ENCODE measurements at regions of chr4 and their contacts with region 1.

Region 1: DNA sequence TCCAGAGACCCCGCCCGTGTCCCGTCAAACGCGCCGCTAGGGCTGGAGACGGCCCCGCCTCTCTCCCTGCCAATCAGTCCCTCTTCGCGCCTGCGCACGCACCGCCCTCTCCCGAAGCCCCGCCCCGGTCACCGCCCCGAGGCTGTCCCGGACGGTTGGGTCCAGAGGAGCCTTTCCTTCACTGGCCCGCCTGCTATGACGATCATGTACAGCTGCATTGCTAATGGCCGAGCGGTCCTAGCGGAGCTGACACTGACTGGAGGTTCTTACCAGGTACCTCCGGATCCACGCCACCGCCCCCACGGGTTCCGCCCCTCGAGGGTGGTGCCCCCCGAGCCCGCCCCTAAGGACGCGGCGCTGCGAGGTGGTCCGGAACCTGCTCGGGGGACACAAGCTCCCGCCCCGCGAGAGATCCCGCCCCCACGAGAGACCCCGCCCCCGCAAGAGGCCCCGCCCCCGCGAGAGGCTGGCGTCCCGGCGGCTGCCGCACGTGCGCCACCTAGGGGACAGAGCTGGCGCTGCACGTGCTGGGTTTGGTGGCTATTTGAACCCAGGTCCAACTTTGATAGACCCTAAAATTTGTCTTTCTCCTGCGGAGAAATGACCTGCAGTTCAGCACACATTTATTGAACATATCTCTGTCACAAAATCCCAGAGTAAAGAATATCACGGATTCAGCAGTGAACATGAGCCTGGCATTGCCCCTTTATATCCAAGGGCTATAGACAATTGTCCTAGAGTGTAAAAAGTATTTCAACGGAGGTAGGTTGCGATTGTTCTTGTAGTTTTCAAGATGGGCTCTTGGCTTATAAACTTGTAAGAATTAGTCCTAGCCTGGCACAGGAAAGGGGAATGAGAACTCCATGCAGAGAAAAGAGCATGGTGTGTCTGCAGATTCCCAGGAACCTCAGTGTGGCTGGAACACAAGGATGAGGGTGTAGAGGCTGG is 88.7 kb downstream of the HNRNPD start:
- DNase-seq: peak; percentile 58
- ATAC-seq: peak; percentile 99
- H3K4me3 ChIP-seq: peak overlapping the region; percentile 40 to 57
- H3K27ac ChIP-seq: no peak overlapping the region
- H3K4me1 ChIP-seq: peaks cover 3% of the 10 kb centered on the region; the same call in 1 of the 2 replicates
- H3K27me3 ChIP-seq: no peaks in the 10 kb centered on the region
- CTCF ChIP-seq: peak; percentile 94

Region 2: DNA sequence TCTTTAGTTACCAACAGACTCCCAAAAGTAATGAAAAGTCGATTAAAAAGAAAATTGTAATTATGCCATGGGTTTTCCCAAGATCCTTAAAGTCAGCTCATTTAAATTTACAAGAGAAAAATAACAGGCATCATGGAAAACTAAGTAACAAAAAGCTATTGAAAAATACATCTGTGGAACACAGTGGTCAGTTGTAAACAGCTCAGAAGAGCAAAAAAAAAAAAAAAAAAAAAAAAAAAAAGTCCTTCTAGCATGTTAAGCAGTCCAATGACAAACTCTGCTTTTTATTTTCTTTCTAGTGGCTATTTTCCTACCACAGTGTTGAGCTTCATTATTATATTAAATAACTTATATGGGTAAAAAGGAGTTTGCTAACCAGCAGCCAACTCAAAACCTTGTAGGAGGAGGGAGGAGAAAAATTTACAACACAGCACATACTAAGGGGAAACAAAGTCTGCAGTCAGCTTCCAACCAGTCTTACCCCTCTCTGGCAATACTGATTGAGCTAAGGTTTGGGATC is 858.3 kb before region 1 on chr4:
- CTCF ChIA-PET with region 1: interaction called, 12 read pairs
- POLR2A ChIA-PET with region 1: no interaction called
- in situ Hi-C with region 1: no loop called
- intact Hi-C with region 1: no loop called
- DNase-seq: no peak
- ATAC-seq: no peak
- H3K4me3 ChIP-seq: no peak overlapping the region
- H3K27ac ChIP-seq: no peak overlapping the region
- H3K4me1 ChIP-seq: no peaks in the 10 kb centered on the region
- H3K27me3 ChIP-seq: no peaks in the 10 kb centered on the region
- CTCF ChIP-seq: no peak

Measured in Panc1 (cell line).